AG04449 (cell line): ENCODE measurements at regions of chr19 and their contacts with region 1.

Region 1: GRCh38 chr19:46728693-46729676 is 12.1 kb upstream of the PRKD2 start:
- DNase-seq: no peak
- H3K4me3 ChIP-seq: no peak overlapping the region
- CTCF ChIP-seq: peak; percentile 90

Region 2: GRCh38 chr19:46451352-46451751 is 277.6 kb before region 1 on chr19:
- CTCF ChIA-PET with region 1: no interaction called
- POLR2A ChIA-PET with region 1: no interaction called
- DNase-seq: no peak
- H3K4me3 ChIP-seq: no peak overlapping the region
- CTCF ChIP-seq: no peak

Region 3: DNA sequence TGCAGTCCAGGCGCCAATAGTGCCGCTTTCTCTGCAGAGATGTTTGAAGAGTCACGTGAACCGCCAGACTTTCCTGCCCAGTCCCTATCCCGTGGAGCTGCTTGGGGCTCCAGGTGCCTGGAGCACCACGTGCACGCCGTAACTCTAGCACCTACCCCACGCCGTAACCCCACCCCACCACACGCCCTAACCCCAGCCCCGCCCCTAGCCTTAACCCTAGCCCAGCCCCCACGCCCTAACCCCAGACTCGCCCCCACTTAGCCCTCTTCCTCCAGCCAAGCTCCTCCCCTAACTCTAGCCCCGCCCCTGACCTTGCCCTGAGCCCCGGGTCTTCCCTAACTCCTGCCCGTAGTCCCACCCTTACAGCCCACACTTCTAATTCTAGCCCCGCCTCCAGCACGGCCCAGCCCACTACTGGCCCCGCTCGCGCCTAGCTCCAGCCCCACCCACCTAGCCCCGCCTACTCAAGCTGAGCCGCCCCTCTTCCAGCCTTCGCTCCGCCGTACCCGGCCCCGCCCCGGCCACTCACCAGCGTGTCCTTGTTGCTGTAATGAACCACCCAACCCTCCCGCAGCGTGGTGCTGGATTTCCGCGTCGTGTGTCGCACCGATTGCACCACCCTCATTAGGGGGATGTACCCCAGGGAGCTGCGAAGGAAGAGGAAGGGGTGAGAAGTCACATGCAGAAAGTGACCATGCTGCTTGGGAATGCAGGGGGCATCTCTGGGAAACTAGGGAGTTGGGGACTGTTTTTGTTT is 31.6 kb before region 1 on chr19:
- CTCF ChIA-PET with region 1: interaction called, 54 read pairs
- POLR2A ChIA-PET with region 1: no interaction called
- DNase-seq: no peak
- H3K4me3 ChIP-seq: no peak overlapping the region
- CTCF ChIP-seq: no peak

Region 4: DNA sequence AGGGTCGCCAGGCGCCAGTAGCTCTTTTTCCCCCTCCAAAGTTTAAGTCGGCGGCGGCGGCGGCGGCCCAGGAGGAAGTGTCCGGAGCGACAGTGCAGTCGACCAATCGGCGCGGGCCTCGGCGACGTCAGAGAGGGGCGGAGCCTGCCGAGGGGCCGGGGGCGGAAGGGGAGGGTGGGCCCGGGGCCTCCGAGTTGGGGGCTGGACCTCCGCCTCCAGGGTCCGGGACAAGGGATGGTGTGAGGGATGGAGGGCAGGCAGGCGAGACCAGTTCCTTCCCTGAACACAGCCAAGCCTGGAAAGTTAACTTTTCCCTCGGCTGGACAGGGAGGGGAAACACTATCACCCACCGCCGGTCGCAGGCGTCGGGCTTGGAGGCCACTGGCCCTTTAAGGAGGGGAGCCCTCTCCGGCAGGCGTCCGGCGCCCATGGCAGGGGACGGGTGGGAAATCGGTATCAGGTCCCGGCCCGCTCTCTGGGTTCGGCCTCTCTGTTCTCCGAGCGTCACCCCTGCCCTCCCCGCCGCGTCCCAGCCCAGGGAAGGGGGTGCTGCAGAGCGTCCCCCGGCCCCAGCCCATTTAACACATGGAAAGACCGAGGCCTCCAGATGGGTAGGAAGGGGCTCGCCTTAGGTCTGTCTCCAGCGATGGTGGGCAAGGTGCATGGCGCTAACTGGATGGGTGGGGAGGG is 11.8 kb before region 1 on chr19 and contains the start of gene PRKD2:
- CTCF ChIA-PET with region 1: interaction called, 39 read pairs
- POLR2A ChIA-PET with region 1: no interaction called
- DNase-seq: no peak
- H3K4me3 ChIP-seq: peak within 1 kb of the TSS; percentile 78
- CTCF ChIP-seq: no peak

Region 5: GRCh38 chr19:46746281-46747013 is 17.5 kb after region 1 on chr19 and contains the start of gene STRN4:
- CTCF ChIA-PET with region 1: interaction called, 138 read pairs
- POLR2A ChIA-PET with region 1: interaction called, 3 read pairs
- DNase-seq: no peak
- H3K4me3 ChIP-seq: peak within 1 kb of the TSS; percentile 91
- CTCF ChIP-seq: no peak